ENCODE measurements at regions of chr10 and their contacts with region 1.

Region 1: DNA sequence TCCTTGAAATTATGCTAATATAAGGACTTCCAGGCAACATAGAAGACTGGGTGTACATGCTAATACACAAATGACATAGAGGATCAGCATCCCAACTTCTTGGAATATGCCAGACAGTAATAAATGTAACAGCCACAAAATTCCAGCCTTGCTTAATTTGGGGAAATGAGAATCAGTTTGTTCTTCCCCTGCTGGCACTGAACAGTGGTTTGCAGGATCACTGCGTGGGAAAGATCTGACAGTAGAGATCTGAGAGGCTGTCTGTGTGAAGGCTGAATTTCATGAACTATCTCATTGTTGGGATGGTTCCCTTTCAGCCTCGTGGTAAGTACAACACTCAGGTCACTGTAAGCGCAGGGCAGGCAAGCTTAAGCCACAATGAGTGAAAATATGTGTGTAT is 1078.0 kb downstream of the LRMDA start:
- DNase-seq: no peak
- H3K4me3 ChIP-seq: no peak overlapping the region
- CTCF ChIP-seq: no peak
- POLR2A ChIP-seq: no peak

Region 2: DNA sequence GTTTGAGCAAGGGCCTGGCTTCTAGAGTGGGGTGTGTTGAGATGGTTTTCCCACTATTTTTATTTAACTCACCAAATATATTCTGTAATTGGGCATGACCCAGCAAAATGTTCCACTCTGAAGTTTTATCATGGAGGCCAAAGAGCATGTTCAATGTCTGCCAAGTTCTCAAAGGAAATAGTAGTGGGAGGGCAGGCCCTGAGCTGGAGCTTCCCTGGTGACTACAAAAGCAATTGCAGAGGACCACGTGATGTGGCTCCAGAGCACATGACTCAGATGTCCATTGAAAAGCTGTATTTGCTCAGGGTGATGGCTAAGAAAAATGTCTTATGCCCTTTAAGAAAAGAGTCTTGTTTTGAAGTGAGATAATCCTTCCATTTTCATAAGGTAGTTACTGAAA is 53.3 kb before region 1 on chr10:
- intact Hi-C with region 1: no loop called
- DNase-seq: no peak
- H3K4me3 ChIP-seq: no peak overlapping the region
- CTCF ChIP-seq: no peak
- POLR2A ChIP-seq: no peak

Region 3: DNA sequence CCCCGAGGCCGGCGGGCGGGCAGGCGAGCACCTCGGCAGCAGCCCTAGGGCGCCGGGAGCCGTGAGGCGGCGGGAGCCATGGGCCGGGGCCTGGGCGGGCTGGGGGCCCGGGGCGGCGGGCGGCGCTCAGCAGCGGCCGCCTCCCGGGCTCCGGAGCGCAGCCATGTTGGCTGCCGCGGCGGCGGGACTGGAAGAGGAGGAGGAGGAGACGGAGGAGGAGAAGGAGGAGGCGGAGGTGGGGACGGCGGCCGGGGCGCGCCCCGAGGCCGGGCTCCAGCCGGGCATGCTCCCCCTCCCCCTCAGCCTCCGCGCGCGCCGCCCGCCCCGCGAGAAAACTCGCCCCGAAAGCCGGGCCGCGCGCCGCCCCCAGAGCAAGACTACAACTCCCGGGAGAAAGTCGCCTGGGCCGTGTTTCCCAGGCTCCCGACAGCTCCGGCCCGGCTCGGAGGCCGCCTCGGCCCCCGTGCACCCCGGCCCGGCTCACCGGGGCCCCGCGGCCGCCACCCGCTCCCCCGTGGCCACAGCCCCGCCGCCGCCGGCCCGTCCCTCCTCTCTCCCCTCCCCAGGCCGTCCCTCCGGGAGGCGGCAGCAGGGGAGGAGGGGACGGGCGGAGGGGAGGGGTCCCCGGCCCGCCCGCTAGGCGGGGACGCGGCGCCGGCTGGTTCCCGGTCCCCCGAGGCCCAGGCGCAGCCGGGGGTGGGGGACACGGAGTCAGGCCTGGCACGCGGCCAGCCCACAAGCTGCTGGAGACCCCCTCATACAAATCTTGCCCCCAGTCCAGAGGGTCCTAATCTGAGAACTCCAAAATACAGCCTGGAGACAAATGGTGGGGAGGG is 1417.3 kb after region 1 on chr10 and contains the start of gene DLG5:
- intact Hi-C with region 1: loop called (anchors 10 kb)
- DNase-seq: peak in 1 of 2 donors; percentile 90
- H3K4me3 ChIP-seq: peak within 1 kb of the TSS; percentile 79
- CTCF ChIP-seq: no peak
- POLR2A ChIP-seq: no peak
- total RNA-seq, gene DLG5: 91.9 to 165 (median 103) TPM